Aorta (tissue), 5 donors: ENCODE measurements at regions of chr1 and their contacts with region 1.

Region 1: GRCh38 chr1:92858564-92859399 is 26.9 kb downstream of the RPL5 start:
- DNase-seq: no peak
- ATAC-seq: peak; percentile 91
- H3K4me3 ChIP-seq: peak overlapping the region in 1 of 2 donors; percentile 41
- H3K27ac ChIP-seq: no peak overlapping the region
- H3K4me1 ChIP-seq: no peaks in the 10 kb centered on the region
- H3K27me3 ChIP-seq: no peaks in the 10 kb centered on the region

Region 2: DNA sequence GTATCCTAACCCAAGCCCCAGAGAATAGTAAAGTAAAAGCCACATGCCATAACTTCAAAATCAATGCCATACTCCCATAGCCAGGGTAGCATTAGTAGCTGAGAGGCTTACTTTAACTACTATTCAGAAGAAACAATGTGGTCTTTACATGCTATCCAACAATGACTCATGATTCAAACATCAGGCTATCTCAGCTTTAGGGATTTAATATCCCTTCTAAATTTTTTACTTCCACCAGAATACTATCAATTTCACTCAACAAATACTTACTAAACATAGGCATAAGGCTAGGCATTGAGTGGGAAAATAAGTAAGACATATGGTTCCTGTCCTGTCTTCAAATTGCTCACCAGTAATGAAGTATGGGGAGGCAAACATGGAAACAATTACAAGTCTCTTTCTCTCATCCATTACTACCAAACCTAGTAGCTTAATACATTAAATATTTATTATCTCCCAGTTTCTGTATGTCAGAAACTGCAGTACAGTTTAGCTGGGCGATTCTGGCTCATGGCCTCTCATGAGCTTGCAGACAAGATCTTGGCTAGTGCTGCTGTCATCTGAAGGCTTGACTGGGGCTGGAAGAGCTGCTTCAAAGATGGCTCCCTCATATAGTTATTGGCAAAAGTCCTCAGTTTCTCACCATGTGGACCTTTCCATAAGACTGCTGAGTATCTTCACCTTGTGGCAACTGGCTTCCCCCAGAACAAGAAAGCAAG is 104.6 kb before region 1 on chr1:
- intact Hi-C with region 1: no loop called
- DNase-seq: no peak
- ATAC-seq: no peak
- H3K4me3 ChIP-seq: no peak overlapping the region
- H3K27ac ChIP-seq: no peak overlapping the region
- H3K4me1 ChIP-seq: no peaks in the 10 kb centered on the region
- H3K27me3 ChIP-seq: no peaks in the 10 kb centered on the region

Region 3: GRCh38 chr1:92907949-92908684 is 49.3 kb after region 1 on chr1:
- intact Hi-C with region 1: no loop called
- DNase-seq: no peak
- ATAC-seq: no peak
- H3K4me3 ChIP-seq: no peak overlapping the region
- H3K27ac ChIP-seq: no peak overlapping the region
- H3K4me1 ChIP-seq: peaks cover 0 to 5% of the 10 kb centered on the region in 2 donors
- H3K27me3 ChIP-seq: no peaks in the 10 kb centered on the region

Region 4: DNA sequence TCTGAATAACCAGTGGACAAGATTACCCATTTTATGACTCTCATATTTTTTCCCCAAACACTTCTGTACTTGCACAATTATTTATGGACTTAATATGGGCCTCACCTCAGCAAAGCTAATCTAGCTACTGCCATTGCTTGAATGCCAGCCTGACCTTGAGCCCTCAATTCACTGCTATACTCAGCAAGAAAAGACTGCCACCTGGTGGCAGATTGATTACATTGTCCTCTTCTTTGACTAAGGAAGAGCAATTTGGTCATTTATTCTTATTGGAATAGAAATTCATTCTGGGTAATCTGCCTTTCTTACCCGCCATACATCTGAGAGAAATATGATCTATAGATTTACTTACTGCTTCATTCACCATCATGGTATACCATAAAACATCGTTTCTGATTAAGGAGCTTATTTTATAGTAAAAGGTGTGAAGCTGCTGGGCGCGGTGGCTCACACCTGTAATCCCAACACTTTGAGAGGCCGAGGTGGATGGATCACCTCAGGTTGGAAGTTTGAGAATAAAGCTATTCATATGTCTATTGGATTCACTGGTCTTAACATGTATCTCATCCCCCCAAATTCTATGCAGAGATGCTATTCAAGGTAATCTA is 135.4 kb after region 1 on chr1:
- intact Hi-C with region 1: loop called (anchors 1 kb)
- DNase-seq: peak in 1 of 2 donors; percentile 55
- ATAC-seq: peak; percentile 89
- H3K4me3 ChIP-seq: no peak overlapping the region
- H3K27ac ChIP-seq: no peak overlapping the region
- H3K4me1 ChIP-seq: no peaks in the 10 kb centered on the region
- H3K27me3 ChIP-seq: no peaks in the 10 kb centered on the region